ENCODE measurements at regions of chr6 and their contacts with region 1.

Region 1: DNA sequence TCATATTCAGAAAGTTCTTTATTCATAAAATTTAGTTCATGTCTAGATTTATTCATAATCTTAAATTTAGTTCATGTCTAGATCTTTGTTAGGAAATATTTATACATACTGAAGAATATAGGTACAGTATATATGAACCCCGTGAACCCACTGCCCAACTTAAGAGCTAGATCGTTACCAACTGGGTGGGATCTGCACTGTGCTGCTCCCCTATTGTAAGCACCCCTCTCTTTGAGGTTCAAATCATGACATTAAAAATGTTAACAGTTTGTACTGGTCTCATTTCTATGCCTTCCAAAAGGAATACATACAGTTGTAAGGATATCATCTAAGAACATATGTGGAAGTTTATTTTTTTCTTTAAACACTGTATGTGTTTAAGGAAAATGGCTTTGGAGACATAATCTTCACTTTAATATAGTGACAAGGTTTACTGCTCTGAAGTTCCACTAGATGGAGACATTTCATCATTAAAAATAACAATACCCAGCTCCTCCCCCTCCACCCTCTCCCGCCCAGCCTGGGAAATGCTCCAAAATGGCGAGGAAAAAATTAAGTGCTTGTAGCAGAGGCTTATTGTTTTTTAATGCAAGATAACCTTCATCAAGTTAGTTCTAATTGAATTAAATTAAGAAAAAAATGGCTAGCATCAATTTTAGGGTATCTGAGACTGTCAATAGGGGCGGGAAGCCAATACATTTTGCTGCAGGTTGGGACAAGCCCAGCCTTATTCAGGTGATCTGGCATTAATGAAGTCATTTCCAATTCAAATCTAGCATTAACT is 104.1 kb upstream of the TRAF3IP2 start:
- DNase-seq: peak; percentile 69
- CTCF ChIP-seq: peak; percentile 55

Region 2: DNA sequence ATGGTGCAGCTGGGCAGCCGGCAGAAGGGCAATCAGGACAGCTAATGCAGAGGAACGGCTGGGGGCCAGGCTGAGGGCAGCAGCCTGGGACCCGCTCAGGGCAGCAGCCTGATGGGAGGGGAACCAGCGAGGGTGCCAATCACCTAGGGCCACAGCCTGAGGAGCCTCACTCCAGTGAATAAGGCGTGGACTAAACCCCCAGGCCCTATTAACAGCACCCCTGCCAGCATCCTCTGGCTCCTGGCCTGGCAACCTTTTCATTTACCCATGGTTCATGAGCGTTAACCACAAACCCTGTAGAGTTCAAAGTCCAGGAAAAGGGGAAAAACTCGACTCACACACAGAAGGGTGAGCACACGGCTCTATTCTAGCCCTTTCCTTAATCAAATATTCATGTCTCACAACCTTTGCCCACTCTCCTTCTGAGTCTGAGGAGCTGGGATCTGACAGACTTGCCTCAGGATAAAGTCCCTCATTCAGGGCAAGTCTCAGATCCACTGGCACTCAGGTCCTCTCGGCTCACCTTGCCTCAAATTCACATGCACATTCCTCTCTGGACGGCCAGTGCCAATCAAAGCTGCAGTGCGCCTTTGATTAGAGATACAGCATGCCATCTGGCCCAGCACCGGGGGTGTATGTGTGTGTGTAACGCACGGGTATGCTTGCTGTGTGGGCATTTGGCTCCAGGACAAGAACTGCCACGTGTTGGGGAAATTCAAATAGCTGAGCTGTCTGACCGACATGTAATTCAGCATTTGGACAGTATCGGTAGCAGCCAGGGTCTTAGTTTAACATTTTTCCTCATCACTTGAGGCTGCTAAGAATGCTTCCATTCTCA is 17.3 kb before region 1 on chr6:
- CTCF ChIA-PET with region 1: interaction called, 22 read pairs
- POLR2A ChIA-PET with region 1: no interaction called
- DNase-seq: no peak
- CTCF ChIP-seq: no peak

Region 3: DNA sequence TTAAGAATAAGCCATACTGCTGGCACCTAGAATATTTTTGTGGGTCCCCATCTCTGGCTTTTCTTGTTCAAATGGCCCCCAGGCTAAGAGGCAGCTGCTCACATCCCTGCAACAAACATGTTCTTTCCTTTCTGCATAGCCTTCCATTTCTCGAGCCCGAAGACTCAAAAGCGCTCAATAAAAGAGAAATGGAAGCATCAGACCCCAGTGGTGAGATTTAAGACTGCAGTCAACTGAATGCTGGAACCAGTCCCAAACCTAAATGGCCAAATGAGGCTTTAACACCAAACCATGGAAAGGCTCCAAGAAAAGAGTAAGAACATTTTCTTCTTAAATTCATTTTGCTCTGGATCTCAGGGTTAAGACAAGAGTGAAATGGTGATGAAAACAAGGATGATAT is 18.0 kb after region 1 on chr6:
- CTCF ChIA-PET with region 1: interaction called, 14 read pairs
- POLR2A ChIA-PET with region 1: no interaction called
- DNase-seq: no peak
- CTCF ChIP-seq: no peak

Region 4: GRCh38 chr6:111997078-111997852 is 287.5 kb after region 1 on chr6:
- CTCF ChIA-PET with region 1: interaction called, 38 read pairs
- POLR2A ChIA-PET with region 1: no interaction called
- DNase-seq: peak; percentile 71
- CTCF ChIP-seq: peak; percentile 87

Region 5: GRCh38 chr6:112029045-112029822 is 319.4 kb after region 1 on chr6:
- CTCF ChIA-PET with region 1: interaction called, 28 read pairs
- POLR2A ChIA-PET with region 1: no interaction called
- DNase-seq: peak; percentile 60
- CTCF ChIP-seq: peak; percentile 75

Region 6: DNA sequence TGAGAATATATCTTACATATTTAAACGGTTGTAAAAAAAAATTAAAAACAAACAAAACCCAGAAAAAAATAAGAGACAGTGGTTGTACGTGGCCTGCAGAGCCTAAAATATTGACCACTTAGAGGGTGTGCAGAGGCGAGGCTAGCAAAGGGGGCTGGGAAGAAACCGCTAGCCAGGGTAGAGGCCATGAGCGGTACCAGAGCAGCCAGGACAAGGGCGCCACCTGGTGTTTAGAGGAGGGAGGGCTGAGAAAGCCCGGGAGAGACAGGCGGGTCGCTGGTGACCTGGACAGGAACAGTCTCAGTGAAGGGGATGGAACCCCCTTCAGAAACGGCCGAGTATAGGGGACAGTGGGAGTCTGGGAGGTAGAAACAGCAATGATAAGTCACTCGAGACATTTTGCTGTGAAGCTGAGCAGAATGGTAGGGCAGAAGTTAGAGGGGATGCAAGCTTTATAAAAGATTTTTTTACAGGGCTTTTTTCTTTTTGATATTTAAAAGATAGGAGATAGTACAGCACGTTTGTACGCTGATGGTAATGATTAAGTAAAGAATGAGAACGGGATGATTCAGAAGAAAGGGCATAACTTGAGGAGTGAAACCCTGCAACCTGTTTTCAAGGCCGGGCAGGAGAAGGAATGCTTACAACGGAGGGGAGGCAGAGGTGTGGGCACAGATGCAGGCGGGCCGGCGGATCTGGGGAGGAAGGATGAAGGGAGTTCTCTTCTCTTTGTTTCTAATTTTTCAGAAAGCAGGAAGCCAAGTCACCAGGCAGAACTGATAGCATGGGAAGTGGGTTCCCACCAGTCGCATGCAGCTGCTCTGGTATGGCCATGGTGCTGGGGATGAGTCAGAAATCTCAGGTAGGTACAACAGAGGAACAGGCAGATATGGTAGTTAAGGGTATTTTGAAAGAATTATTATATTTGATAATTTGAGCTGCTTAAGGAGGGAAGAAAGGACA is 453.8 kb after region 1 on chr6:
- CTCF ChIA-PET with region 1: interaction called, 19 read pairs
- POLR2A ChIA-PET with region 1: no interaction called
- DNase-seq: peak; percentile 78
- CTCF ChIP-seq: peak; percentile 98